ENCODE measurements at regions of chr4 and their contacts with region 1.

Region 1: GRCh38 chr4:87006676-87007527 is 72.1 kb downstream of the AFF1 start:
- H3K4me3 Mint-ChIP-seq: peak overlapping the region; percentile 94
- H3K27ac Mint-ChIP-seq: peak overlapping the region; percentile 99
- H3K4me1 Mint-ChIP-seq: peaks cover 50% of the 10 kb centered on the region
- H3K27me3 Mint-ChIP-seq: no peaks in the 10 kb centered on the region

Region 2: DNA sequence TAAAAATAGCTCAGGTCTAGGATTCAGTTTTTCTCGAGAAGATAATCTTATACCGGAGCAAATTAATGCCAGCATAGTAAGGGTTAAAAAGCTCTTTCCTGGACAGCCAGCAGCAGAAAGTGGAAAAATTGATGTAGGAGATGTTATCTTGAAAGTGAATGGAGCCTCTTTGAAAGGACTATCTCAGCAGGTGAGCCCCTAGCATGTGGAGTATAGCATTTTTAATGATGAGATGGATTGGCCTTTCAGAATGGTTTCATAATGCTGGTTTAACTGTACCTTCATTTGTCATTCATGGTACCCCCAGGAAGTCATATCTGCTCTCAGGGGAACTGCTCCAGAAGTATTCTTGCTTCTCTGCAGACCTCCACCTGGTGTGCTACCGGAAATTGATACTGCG is 237.1 kb before region 1 on chr4:
- intact Hi-C with region 1: no loop called
- H3K4me3 Mint-ChIP-seq: no peak overlapping the region
- H3K27ac Mint-ChIP-seq: no peak overlapping the region
- H3K4me1 Mint-ChIP-seq: no peaks in the 10 kb centered on the region
- H3K27me3 Mint-ChIP-seq: no peaks in the 10 kb centered on the region

Region 3: DNA sequence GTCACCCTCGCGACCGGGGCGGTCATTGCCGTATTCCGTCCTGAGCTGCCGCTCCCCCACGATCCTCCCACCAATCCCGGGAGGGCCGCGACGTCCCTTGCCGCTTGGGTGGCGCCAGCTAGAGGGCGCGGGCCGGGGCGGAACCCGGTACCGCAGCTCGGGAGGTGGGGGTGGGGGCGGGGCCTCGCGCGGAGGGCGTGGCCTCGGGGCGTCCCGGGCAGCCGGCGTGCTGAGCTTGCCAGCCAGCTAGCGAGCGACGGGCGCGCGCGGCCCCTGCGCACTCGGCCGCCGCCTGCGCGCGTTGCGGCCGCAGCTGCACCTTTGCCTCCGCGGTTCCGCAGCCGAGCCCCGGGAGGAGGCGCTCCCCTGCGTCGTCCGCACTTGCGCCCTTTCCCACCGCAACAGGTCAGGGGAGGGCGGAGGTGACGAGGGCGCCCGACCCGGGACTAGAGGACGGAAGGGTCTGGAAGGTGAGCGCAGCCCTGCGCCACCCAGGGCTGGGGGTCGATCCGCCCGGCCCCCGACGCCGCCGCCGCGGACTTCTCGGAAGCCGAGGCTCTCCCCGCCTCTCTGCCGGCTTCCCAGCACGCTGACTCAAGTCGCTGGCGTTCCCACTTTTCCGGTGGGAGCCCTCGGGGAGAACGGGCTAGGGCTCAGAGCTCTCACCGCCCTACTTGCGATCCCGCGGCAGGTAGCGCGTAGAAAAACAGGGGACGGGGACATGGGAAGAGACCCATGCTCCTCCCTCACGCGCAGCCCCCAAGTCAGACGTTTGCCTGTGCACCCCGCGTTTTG is 71.9 kb before region 1 on chr4 and contains the start of gene AFF1:
- intact Hi-C with region 1: loop called (anchors 1 kb)
- H3K4me3 Mint-ChIP-seq: peak within 1 kb of the TSS; percentile 97
- H3K27ac Mint-ChIP-seq: peak within 1 kb of the TSS; percentile 95
- H3K4me1 Mint-ChIP-seq: peaks cover 45% of the 10 kb centered on the region
- H3K27me3 Mint-ChIP-seq: no peaks in the 10 kb centered on the region

Region 4: DNA sequence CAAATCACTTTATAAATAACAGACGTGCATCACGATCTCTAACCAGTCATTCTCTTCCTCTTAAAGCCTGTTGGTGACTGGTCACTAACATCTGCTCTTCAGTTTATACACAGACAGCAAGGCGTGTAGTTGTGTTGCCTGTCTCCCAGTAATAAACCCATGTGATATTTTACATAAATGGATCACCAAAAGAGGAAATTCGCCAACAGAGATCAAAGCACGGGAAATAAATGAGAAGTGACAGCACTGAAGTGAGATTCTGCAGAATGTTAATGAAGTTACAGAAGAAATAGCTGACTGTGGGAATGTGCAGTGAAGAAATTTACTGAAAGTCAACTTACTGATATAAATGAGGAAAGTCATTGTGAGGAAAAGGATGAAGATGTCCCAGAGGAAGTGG is 25.1 kb before region 1 on chr4:
- intact Hi-C with region 1: loop called (anchors 2 kb)
- H3K4me3 Mint-ChIP-seq: peak overlapping the region; percentile 27
- H3K27ac Mint-ChIP-seq: peak overlapping the region; percentile 95
- H3K4me1 Mint-ChIP-seq: peaks cover 39% of the 10 kb centered on the region
- H3K27me3 Mint-ChIP-seq: no peaks in the 10 kb centered on the region

Region 5: DNA sequence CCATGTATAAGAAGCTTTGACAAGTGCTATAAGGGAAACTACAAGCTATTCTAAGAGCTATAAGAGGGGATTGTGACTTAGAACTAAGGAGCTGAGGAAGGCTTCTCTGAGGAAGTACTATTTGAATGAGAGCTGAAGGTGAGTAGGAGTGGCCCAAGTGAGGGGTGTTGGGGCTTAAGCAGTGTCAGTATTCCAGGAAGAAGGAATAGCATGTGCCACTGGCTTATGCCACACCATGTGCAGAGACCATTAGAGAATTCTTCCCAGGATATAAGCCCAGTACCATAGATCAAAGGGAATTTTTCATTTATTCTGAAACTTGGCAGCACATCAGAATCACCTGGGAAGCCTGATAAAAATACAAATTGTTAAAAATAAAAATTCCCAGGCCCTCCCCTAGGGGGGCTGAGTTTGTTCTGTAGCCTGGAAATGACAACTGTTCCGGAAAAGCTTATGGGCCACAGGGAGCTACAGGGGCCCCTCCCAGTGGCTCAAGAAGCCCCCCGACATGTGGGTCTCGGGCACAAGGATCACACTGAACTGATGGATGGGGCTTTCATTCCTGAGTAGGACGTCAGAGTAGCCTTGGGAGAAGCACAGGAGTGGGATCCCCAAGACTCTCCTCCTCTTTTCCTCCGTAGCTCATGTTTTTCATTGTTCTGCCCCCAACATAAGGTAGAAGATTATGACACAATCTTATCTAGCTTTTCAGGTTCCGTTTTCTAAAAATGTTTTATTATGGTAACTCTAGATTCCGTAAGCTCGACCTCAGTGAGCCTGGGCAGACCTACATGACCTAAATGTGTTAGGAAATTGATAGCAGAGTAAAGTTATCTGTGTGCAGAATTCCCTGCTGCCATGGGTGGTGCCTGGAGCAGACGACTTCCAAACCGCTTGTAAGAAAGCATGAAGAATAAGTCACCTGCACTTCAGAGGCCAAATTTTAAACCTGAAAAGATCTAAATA is 47.2 kb after region 1 on chr4:
- intact Hi-C with region 1: loop called (anchors 5 kb)
- H3K4me3 Mint-ChIP-seq: no peak overlapping the region
- H3K27ac Mint-ChIP-seq: peak overlapping the region; percentile 78
- H3K4me1 Mint-ChIP-seq: peaks cover 91% of the 10 kb centered on the region
- H3K27me3 Mint-ChIP-seq: no peaks in the 10 kb centered on the region

Region 6: GRCh38 chr4:87073199-87074120 is 66.6 kb after region 1 on chr4:
- intact Hi-C with region 1: loop called (anchors 10 kb)
- H3K4me3 Mint-ChIP-seq: peak overlapping the region; percentile 71
- H3K27ac Mint-ChIP-seq: peak overlapping the region; percentile 87
- H3K4me1 Mint-ChIP-seq: peaks cover 76% of the 10 kb centered on the region
- H3K27me3 Mint-ChIP-seq: no peaks in the 10 kb centered on the region

Region 7: DNA sequence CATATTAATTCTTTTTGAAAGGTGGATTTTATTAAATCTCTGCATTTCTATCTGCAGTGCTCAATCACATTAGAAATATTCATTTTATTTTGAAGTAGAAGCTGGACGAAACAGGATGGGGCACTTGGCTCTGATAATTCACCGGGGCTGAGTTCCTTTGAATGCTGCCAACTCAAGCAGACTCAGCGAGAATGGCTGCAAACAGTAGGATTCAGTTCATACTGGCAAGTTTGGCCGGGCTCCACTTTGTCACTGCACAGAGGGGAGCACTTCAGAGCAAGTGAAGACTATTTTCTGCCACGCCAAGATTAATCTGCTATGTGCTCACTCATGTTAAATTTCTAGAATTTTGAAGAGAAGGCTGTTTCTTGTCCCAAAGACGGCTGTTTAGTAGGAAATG is 244.2 kb after region 1 on chr4:
- intact Hi-C with region 1: no loop called
- H3K4me3 Mint-ChIP-seq: no peak overlapping the region
- H3K27ac Mint-ChIP-seq: no peak overlapping the region
- H3K4me1 Mint-ChIP-seq: no peaks in the 10 kb centered on the region
- H3K27me3 Mint-ChIP-seq: no peaks in the 10 kb centered on the region